ENCODE measurements at regions of chr3 and their contacts with region 1.

Region 1: GRCh38 chr3:110070161-110070916 is 733.0 kb upstream of the DPPA4 start:
- DNase-seq: no peak
- H3K4me3 Mint-ChIP-seq: no peak overlapping the region
- H3K27ac Mint-ChIP-seq: peak overlapping the region; percentile 6
- H3K4me1 Mint-ChIP-seq: peaks cover 16% of the 10 kb centered on the region
- H3K27me3 Mint-ChIP-seq: no peaks in the 10 kb centered on the region

Region 2: GRCh38 chr3:109018828-109019227 is 1051.5 kb before region 1 on chr3:
- CTCF ChIA-PET with region 1: no interaction called
- POLR2A ChIA-PET with region 1: no interaction called
- intact Hi-C with region 1: no loop called
- DNase-seq: peak; percentile 9
- H3K4me3 Mint-ChIP-seq: no peak overlapping the region
- H3K27ac Mint-ChIP-seq: no peak overlapping the region
- H3K4me1 Mint-ChIP-seq: no peaks in the 10 kb centered on the region
- H3K27me3 Mint-ChIP-seq: peaks cover 11% of the 10 kb centered on the region

Region 3: GRCh38 chr3:109853077-109853731 is 217.1 kb before region 1 on chr3:
- CTCF ChIA-PET with region 1: no interaction called
- POLR2A ChIA-PET with region 1: no interaction called
- intact Hi-C with region 1: loop called (anchors 5 kb)
- DNase-seq: no peak
- H3K4me3 Mint-ChIP-seq: no peak overlapping the region
- H3K27ac Mint-ChIP-seq: no peak overlapping the region
- H3K4me1 Mint-ChIP-seq: peaks cover 10% of the 10 kb centered on the region
- H3K27me3 Mint-ChIP-seq: no peaks in the 10 kb centered on the region

Region 4: DNA sequence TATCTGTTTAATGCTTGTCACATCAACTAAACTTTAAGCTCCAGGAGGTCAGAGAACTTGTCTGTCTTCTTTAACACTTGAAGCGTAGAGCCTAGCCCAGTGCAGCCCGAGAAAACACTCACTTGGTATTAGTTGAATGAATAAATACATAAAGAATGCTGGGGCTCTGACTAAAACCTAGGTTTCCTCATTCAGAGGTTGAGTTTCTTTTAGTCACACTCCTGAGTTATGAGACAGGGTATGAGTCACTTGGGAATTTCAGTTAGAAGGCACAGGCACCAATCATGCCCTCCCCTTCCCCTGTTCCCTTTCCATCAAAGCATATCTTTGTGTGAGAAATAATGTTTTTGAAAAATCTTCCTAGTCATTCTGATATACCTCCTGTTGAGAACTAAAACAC is 143.2 kb before region 1 on chr3:
- CTCF ChIA-PET with region 1: no interaction called
- POLR2A ChIA-PET with region 1: no interaction called
- intact Hi-C with region 1: loop called (anchors 1 kb)
- DNase-seq: peak; percentile 34
- H3K4me3 Mint-ChIP-seq: no peak overlapping the region
- H3K27ac Mint-ChIP-seq: no peak overlapping the region
- H3K4me1 Mint-ChIP-seq: peaks cover 5% of the 10 kb centered on the region
- H3K27me3 Mint-ChIP-seq: no peaks in the 10 kb centered on the region

Region 5: DNA sequence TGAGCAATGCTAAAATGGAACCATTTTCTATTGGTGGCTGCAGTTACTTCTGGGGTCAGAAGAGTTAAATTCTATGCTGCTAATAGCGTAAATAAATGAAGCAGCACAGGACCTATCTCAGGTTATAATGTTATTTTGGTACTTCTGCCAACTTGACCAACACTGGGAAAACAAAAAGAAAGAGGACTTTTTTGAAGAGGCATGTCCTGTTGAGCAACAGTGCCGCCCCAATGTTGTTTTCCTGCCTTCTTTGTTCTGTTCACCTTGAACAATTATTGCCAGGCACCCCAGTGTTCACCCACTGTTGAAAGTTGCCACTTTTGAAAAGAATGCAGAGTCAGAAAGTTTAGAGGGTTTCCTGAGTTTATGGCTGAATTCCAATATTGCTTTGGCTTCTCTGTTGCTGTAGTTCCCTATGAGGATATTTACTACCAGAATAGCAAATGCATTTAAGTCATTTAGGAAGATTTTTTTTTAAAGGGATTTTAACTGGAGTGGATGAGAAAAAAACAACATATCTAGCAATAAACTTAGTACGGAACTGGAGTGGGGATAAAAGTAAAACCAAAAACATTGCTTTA is 54.0 kb before region 1 on chr3:
- CTCF ChIA-PET with region 1: no interaction called
- POLR2A ChIA-PET with region 1: no interaction called
- intact Hi-C with region 1: loop called (anchors 2 kb)
- DNase-seq: no peak
- H3K4me3 Mint-ChIP-seq: no peak overlapping the region
- H3K27ac Mint-ChIP-seq: no peak overlapping the region
- H3K4me1 Mint-ChIP-seq: peaks cover 10% of the 10 kb centered on the region
- H3K27me3 Mint-ChIP-seq: no peaks in the 10 kb centered on the region

Region 6: DNA sequence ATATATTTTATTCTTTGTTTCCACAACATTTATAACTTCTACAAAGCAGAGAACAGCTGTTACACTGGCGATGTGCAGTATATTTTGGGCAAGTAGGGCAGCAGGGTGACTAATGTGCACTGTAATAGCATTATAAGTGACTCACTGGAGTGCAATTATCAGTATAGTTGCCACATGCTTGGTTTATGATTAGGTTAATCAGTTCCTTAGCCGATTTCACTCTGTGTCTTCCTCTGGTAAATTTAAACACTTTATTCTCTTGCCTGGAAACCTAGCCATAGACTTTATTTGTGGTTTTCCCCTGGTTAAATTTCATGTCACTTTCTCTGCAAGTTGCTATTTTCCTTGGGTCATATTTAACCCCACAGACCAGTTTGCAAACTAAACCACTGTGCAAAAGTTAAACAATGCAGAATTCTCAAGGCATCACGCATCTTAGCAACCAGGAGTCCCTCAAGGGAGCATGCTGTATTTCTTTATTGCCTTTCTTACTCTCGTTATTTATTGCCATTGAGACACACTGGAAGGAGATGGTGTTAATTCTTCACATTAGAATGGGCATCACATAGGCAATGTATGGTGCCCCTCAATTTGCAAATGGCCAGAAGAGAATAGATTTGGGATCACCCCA is 42.8 kb before region 1 on chr3:
- CTCF ChIA-PET with region 1: no interaction called
- POLR2A ChIA-PET with region 1: no interaction called
- intact Hi-C with region 1: no loop called
- DNase-seq: no peak
- H3K4me3 Mint-ChIP-seq: no peak overlapping the region
- H3K27ac Mint-ChIP-seq: no peak overlapping the region
- H3K4me1 Mint-ChIP-seq: no peaks in the 10 kb centered on the region
- H3K27me3 Mint-ChIP-seq: no peaks in the 10 kb centered on the region